ENCODE measurements at regions of chr11 and their contacts with region 1.

Region 1: GRCh38 chr11:117479372-117479771 is 151.7 kb downstream of the CEP164 start:
- DNase-seq: peak in 1 of 2 experiments; percentile 71
- H3K4me3 ChIP-seq: no peak overlapping the region
- H3K27ac ChIP-seq: no peak overlapping the region
- H3K4me1 ChIP-seq: peaks cover 0 to 12% (median 6%) of the 10 kb centered on the region in 4 experiments; a peak in 6 of 7 replicates
- H3K27me3 ChIP-seq: no peaks in the 10 kb centered on the region; a peak in 1 of 7 replicates
- CTCF ChIP-seq: peak; percentile 60 to 67 (median 62)
- EP300 ChIP-seq: no peak
- POLR2A ChIP-seq: no peak
- RAD21 ChIP-seq: peak; percentile 48 to 64

Region 2: DNA sequence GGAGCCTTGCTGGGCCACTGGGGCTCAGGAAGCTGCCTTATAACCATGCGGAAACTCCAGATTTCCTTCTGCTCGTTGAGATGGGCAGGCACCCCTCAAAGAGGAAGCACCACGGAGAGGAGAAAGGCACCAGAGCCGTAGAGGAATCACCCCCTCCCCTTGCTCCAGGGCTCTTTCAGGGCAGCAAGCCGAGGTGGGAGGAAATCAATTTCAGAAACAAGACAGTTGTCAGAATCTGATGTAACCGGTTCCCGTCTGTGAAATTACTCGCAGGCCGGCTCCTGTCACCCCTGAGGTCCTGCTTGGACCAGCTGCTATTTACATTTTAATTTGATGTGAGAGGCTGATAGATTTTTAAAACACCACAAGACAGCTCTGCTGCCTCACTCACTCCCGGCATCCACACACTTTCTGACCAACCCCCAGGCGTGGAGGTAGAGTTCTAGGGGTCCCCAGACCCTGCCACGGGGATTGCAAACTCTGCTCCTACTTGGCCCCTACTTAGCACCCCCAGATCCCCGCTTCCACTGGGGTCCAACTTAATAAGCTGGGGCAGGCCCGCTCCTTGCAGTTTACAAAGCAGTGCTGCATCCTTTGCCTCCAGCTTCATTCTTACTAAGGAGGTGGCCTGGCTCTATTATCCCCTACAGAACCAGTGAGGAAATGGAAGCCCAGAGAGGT is 10.8 kb after region 1 on chr11:
- CTCF ChIA-PET with region 1: interaction called, 25 read pairs
- POLR2A ChIA-PET with region 1: no interaction called
- DNase-seq: no peak
- H3K4me3 ChIP-seq: no peak overlapping the region
- H3K27ac ChIP-seq: no peak overlapping the region
- H3K4me1 ChIP-seq: peaks cover 4 to 14% (median 11%) of the 10 kb centered on the region in 4 experiments
- H3K27me3 ChIP-seq: peaks cover 0 to 5% (median 0%) of the 10 kb centered on the region in 4 experiments; a peak in 2 of 7 replicates
- CTCF ChIP-seq: no peak
- EP300 ChIP-seq: no peak
- POLR2A ChIP-seq: no peak
- RAD21 ChIP-seq: no peak

Region 3: DNA sequence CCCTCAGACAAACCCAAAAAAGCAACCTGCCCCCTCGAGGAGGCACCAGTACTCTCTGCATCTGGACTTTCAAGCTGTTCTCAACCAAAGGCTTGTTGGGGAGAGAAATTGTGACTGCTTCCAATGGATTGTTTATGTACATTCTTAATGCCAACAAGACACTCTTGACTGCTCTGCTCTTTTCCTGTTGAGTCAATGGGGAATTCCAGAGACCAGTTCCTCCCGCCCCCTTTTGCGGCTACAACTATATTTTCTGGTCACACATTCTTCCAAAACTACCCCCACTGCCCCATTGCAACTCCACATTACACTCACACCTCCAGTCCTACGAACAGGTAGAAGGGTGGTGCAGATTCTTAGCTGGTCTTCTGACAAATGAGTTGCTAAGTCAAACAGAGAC is 130.7 kb after region 1 on chr11:
- CTCF ChIA-PET with region 1: interaction called, 11 read pairs
- POLR2A ChIA-PET with region 1: no interaction called
- DNase-seq: no peak
- H3K4me3 ChIP-seq: no peak overlapping the region
- H3K27ac ChIP-seq: no peak overlapping the region
- H3K4me1 ChIP-seq: peaks cover 0 to 34% (median 19%) of the 10 kb centered on the region in 4 experiments; a peak in 5 of 7 replicates
- H3K27me3 ChIP-seq: peaks cover 0 to 4% (median 1%) of the 10 kb centered on the region in 4 experiments; a peak in 3 of 7 replicates
- CTCF ChIP-seq: no peak
- EP300 ChIP-seq: no peak
- POLR2A ChIP-seq: no peak
- RAD21 ChIP-seq: no peak